ENCODE measurements at regions of chr5 and their contacts with region 1.

Region 1: GRCh38 chr5:146165460-146165859 is 17.0 kb downstream of the LARS1 start:
- DNase-seq: no peak
- ATAC-seq: no peak
- H3K4me3 ChIP-seq: no peak overlapping the region
- H3K4me3 Mint-ChIP-seq: no peak overlapping the region
- H3K27ac ChIP-seq: no peak overlapping the region
- H3K27ac Mint-ChIP-seq: no peak overlapping the region
- H3K4me1 ChIP-seq: no peaks in the 10 kb centered on the region
- H3K4me1 Mint-ChIP-seq: peaks cover 9% of the 10 kb centered on the region
- H3K27me3 ChIP-seq: no peaks in the 10 kb centered on the region
- H3K27me3 Mint-ChIP-seq: no peaks in the 10 kb centered on the region
- CTCF ChIP-seq: no peak

Region 2: GRCh38 chr5:145362261-145362660 is 803.2 kb before region 1 on chr5:
- CTCF ChIA-PET with region 1: no interaction called
- POLR2A ChIA-PET with region 1: no interaction called
- intact Hi-C with region 1: no loop called
- DNase-seq: no peak
- ATAC-seq: no peak
- H3K4me3 ChIP-seq: no peak overlapping the region
- H3K4me3 Mint-ChIP-seq: no peak overlapping the region
- H3K27ac ChIP-seq: no peak overlapping the region
- H3K27ac Mint-ChIP-seq: no peak overlapping the region
- H3K4me1 ChIP-seq: no peaks in the 10 kb centered on the region
- H3K4me1 Mint-ChIP-seq: no peaks in the 10 kb centered on the region
- H3K27me3 ChIP-seq: no peaks in the 10 kb centered on the region
- H3K27me3 Mint-ChIP-seq: no peaks in the 10 kb centered on the region
- CTCF ChIP-seq: no peak

Region 3: GRCh38 chr5:146193291-146193690 is 27.8 kb after region 1 on chr5:
- CTCF ChIA-PET with region 1: no interaction called
- POLR2A ChIA-PET with region 1: no interaction called
- intact Hi-C with region 1: no loop called
- DNase-seq: no peak
- ATAC-seq: no peak
- H3K4me3 ChIP-seq: no peak overlapping the region
- H3K4me3 Mint-ChIP-seq: no peak overlapping the region
- H3K27ac ChIP-seq: no peak overlapping the region
- H3K27ac Mint-ChIP-seq: no peak overlapping the region
- H3K4me1 ChIP-seq: no peaks in the 10 kb centered on the region
- H3K4me1 Mint-ChIP-seq: no peaks in the 10 kb centered on the region
- H3K27me3 ChIP-seq: peaks cover 0 to 5% of the 10 kb centered on the region in 2 experiments
- H3K27me3 Mint-ChIP-seq: peaks cover 20% of the 10 kb centered on the region
- CTCF ChIP-seq: no peak

Region 4: GRCh38 chr5:146213210-146213826 is 47.9 kb after region 1 on chr5:
- CTCF ChIA-PET with region 1: no interaction called
- POLR2A ChIA-PET with region 1: no interaction called
- intact Hi-C with region 1: loop called in 1 of 2 experiments (anchors 10 kb)
- DNase-seq: peak in 1 of 9 experiments; percentile 31
- ATAC-seq: no peak
- H3K4me3 ChIP-seq: no peak overlapping the region
- H3K4me3 Mint-ChIP-seq: no peak overlapping the region
- H3K27ac ChIP-seq: no peak overlapping the region
- H3K27ac Mint-ChIP-seq: no peak overlapping the region
- H3K4me1 ChIP-seq: peaks cover 27% of the 10 kb centered on the region
- H3K4me1 Mint-ChIP-seq: peaks cover 65% of the 10 kb centered on the region
- H3K27me3 ChIP-seq: no peaks in the 10 kb centered on the region
- H3K27me3 Mint-ChIP-seq: no peaks in the 10 kb centered on the region
- CTCF ChIP-seq: no peak

Region 5: DNA sequence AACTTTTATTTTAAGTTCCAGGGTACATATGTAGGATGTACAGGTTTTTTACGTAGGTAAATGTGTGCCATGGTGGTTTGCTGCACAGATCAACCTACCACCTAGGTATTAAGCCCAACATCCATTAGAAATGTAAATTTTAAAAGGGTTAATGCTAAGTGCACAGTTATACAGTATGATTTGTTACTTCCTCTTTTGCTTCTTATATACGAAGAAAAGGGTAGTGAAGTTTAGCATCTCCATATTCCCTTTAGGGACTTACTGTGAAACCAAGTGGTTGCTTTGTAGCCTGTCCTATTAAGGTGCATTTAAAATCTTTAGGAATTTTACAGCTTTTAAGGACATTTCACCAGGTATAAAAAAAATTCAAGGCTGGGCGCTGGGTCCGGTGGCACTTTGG is 84.3 kb after region 1 on chr5:
- CTCF ChIA-PET with region 1: no interaction called
- POLR2A ChIA-PET with region 1: no interaction called
- intact Hi-C with region 1: loop called in 1 of 2 experiments (anchors 10 kb)
- DNase-seq: no peak
- ATAC-seq: no peak
- H3K4me3 ChIP-seq: no peak overlapping the region
- H3K4me3 Mint-ChIP-seq: no peak overlapping the region
- H3K27ac ChIP-seq: no peak overlapping the region
- H3K27ac Mint-ChIP-seq: no peak overlapping the region
- H3K4me1 ChIP-seq: no peaks in the 10 kb centered on the region
- H3K4me1 Mint-ChIP-seq: peaks cover 15% of the 10 kb centered on the region
- H3K27me3 ChIP-seq: no peaks in the 10 kb centered on the region
- H3K27me3 Mint-ChIP-seq: no peaks in the 10 kb centered on the region
- CTCF ChIP-seq: no peak